K562 (cell line): ENCODE measurements at regions of chr13 and their contacts with region 1.

Region 1: DNA sequence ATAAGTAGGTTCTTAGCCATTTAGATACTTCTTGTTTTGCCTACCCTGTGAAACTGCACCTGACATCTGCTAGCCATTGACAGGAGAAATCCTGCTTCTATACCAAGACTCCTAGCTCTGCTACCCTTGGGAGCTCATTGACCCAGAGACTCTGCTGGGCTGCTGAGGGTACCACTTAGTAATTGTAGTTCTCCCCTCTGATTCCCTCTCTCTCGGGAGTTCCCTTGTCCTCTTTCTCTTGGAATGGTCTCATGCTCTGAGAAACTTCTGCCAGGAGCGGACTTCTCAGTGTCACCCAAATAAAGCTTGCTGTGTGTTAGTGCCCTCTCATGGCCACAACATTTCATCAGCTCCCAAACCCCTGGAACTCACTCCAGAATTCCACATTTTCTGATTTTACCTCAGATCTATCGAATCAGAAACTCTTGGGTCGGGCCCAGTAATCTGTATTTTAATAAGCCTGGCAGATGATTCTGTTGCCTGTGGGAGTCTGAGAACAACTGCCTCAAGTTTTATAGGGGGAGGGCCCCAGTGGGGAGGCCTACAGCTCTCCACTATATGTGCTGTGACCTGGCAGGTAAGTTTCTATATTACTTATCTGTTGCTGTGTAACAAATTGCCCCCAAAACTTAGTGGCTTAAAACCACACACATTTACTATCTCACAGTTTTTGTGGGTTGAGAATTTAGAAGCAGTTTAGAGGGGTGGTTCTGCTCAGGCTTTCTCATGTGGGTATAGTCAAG is 221.1 kb downstream of the TDRD3 start:
- DNase-seq: peak in 1 of 4 experiments; percentile 3
- ATAC-seq: peak; percentile 68; the same call in 2 of the 3 replicates
- H3K4me3 ChIP-seq: no peak overlapping the region
- H3K27ac ChIP-seq: no peak overlapping the region
- H3K4me1 ChIP-seq: no peaks in the 10 kb centered on the region
- H3K27me3 ChIP-seq: no peaks in the 10 kb centered on the region
- CTCF ChIP-seq: peak; percentile 25 to 39 (median 35); a peak in 4 of 6 replicates
- EP300 ChIP-seq: no peak
- POLR2A ChIP-seq: no peak
- RAD21 ChIP-seq: peak; percentile 65 to 72

Region 2: DNA sequence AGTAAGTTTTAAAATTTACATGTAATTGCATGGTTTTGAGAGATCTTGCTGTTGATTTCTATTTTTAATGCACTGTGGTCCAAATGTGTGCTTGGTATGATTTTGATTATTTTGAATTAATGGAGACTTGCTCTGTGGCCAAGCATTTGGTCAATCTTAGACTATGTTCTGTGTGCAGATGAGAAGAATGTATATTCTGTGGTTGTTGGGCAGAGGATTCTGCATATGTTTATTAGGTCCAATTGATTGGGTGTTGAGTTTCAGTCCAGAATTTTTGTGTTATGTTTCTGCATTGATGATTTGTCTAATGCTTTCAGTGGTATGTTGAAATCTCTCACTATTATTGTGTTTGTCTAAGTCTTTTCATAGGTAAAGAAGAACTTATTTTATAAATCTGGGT is 138.9 kb before region 1 on chr13:
- CTCF ChIA-PET with region 1: no interaction called
- POLR2A ChIA-PET with region 1: no interaction called
- in situ Hi-C with region 1: loop called (anchors 10 kb)
- intact Hi-C with region 1: no loop called
- DNase-seq: no peak
- ATAC-seq: no peak
- H3K4me3 ChIP-seq: no peak overlapping the region
- H3K27ac ChIP-seq: no peak overlapping the region
- H3K4me1 ChIP-seq: no peaks in the 10 kb centered on the region
- H3K27me3 ChIP-seq: no peaks in the 10 kb centered on the region
- CTCF ChIP-seq: no peak
- EP300 ChIP-seq: no peak
- POLR2A ChIP-seq: no peak
- RAD21 ChIP-seq: no peak

Region 3: GRCh38 chr13:60494296-60494695 is 123.9 kb before region 1 on chr13:
- CTCF ChIA-PET with region 1: no interaction called
- POLR2A ChIA-PET with region 1: no interaction called
- in situ Hi-C with region 1: no loop called
- intact Hi-C with region 1: no loop called
- DNase-seq: no peak
- ATAC-seq: no peak
- H3K4me3 ChIP-seq: no peak overlapping the region
- H3K27ac ChIP-seq: no peak overlapping the region
- H3K4me1 ChIP-seq: no peaks in the 10 kb centered on the region
- H3K27me3 ChIP-seq: no peaks in the 10 kb centered on the region
- CTCF ChIP-seq: no peak
- EP300 ChIP-seq: no peak
- POLR2A ChIP-seq: no peak
- RAD21 ChIP-seq: no peak

Region 4: DNA sequence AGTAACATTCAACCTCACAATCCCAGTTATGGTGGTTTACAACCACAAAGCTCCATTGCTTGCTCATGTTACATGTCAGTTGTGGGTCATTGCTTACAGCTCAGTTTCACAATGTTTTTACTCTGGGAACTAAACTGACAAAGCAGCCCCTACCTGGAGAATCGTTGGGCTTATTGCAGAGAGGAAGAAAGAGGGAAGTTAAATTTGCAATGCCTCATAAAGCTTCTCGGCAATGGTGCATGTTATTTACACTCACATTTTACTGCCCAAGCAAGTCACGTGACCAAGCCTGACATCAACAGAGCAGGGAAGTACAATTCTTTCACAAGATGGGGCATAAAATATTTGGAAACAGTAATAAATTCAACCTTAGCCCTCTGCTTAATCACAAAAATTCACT is 220.4 kb after region 1 on chr13:
- CTCF ChIA-PET with region 1: no interaction called
- POLR2A ChIA-PET with region 1: no interaction called
- in situ Hi-C with region 1: no loop called
- intact Hi-C with region 1: no loop called
- DNase-seq: no peak
- ATAC-seq: no peak
- H3K4me3 ChIP-seq: no peak overlapping the region
- H3K27ac ChIP-seq: no peak overlapping the region
- H3K4me1 ChIP-seq: no peaks in the 10 kb centered on the region
- H3K27me3 ChIP-seq: no peaks in the 10 kb centered on the region
- CTCF ChIP-seq: no peak
- EP300 ChIP-seq: no peak
- POLR2A ChIP-seq: no peak
- RAD21 ChIP-seq: no peak